Ascending aorta (tissue), 2 donors: ENCODE measurements at regions of chr11 and their contacts with region 1.

Region 1: DNA sequence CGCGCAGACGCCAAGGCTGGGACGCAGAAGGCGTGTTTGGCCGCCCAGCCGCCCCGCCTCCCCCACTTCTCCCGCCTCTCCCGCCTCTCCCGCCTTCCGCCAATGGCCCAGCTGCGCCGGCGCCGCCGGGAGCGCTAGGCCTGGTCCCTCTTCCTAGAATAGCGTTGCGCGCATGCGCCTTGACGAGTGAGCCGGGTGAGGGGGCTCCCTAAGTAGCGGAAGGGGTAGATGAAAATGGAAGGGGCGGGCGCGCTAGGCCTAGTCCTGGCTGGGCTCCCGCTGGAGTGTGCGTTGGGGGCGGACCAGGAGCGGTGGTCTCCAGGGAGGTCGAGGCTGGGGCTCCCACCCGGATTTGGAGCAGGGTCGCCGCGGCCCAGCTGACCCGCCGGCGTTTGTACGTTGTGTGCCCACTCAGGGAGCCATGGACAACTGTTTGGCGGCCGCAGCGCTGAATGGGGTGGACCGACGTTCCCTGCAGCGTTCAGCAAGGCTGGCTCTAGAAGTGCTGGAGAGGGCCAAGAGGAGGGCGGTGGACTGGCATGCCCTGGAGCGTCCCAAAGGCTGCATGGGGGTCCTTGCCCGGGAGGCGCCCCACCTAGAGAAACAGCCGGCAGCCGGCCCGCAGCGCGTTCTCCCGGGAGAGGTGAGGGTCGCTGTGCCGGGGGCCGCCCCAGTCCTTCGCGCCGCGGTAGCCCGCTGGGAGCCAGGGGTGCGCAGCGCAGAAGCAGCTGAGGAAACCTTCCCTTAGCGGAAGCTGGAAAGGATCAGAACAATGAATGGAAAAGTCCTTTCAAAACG is at the start of gene AKIP1:
- DNase-seq: peak; percentile 81 to 97
- H3K4me3 ChIP-seq: peak within 1 kb of the TSS; percentile 72 to 79
- H3K27ac ChIP-seq: peak within 1 kb of the TSS; percentile 88 to 91
- H3K4me1 ChIP-seq: peaks cover 4 to 12% of the 10 kb centered on the region in 2 donors
- H3K27me3 ChIP-seq: no peaks in the 10 kb centered on the region
- CTCF ChIP-seq: no peak
- total RNA-seq, gene AKIP1: 11.4 TPM

Region 2: GRCh38 chr11:8682303-8683114 is 228.7 kb before region 1 on chr11 and contains the starts of genes RPL27A and TRIM66:
- intact Hi-C with region 1: loop called (anchors 2 kb)
- DNase-seq: peak; percentile 91 to 99
- H3K4me3 ChIP-seq: peak within 1 kb of the TSS; percentile 65 to 86
- H3K27ac ChIP-seq: peak within 1 kb of the TSS; percentile 81 to 97
- H3K4me1 ChIP-seq: peaks cover 0 to 16% of the 10 kb centered on the region in 2 donors
- H3K27me3 ChIP-seq: no peaks in the 10 kb centered on the region
- CTCF ChIP-seq: peak in 2 of 3 experiments; percentile 8 to 11
- total RNA-seq, gene RPL27A: 789 TPM
- total RNA-seq, gene TRIM66: 3.9 TPM

Region 3: GRCh38 chr11:8732748-8733241 is 178.4 kb before region 1 on chr11:
- intact Hi-C with region 1: no loop called
- DNase-seq: peak; percentile 70 to 96
- H3K4me3 ChIP-seq: no peak overlapping the region
- H3K27ac ChIP-seq: peak overlapping the region; percentile 75 to 79
- H3K4me1 ChIP-seq: peaks cover 22 to 48% of the 10 kb centered on the region in 2 donors
- H3K27me3 ChIP-seq: no peaks in the 10 kb centered on the region
- CTCF ChIP-seq: no peak

Region 4: DNA sequence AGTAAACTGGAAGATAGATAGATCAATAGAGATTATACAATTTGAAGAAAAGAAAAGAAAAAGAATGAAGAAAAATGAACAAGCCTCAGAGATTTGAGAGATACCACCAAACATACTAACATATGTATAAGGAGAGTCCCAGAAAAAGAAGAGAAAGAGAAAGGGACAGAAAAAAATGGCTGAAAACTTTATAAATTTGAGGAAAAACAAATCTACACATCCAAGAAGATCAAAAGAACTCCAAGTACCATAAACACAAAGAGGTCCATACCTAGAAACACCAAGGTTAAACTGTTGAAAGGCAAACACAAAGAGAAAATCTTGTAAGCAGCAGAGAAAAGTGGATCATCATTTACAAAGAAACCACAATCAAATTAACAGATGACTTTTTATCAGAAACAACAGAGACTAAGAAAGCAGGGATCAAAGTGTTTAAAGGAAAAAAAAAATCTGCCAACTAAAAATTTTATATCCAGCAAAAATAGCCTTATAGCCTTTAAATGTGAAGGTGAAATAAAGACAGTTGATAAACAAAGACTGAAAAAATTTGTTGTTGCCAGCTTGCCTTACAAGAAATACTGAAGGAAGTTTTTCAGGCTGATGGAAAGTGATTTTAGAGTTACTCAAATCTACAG is 12.0 kb before region 1 on chr11:
- intact Hi-C with region 1: no loop called
- DNase-seq: no peak
- H3K4me3 ChIP-seq: no peak overlapping the region
- H3K27ac ChIP-seq: no peak overlapping the region
- H3K4me1 ChIP-seq: no peaks in the 10 kb centered on the region
- H3K27me3 ChIP-seq: no peaks in the 10 kb centered on the region
- CTCF ChIP-seq: no peak

Region 5: GRCh38 chr11:9003573-9004309 is 92.5 kb after region 1 on chr11 and contains the start of gene NRIP3:
- intact Hi-C with region 1: loop called (anchors 2 kb)
- DNase-seq: peak in 1 of 2 donors; percentile 85
- H3K4me3 ChIP-seq: peak within 1 kb of the TSS; percentile 40 to 61
- H3K27ac ChIP-seq: peak within 1 kb of the TSS in 1 of 2 donors; percentile 0
- H3K4me1 ChIP-seq: peaks cover 0 to 14% of the 10 kb centered on the region in 2 donors
- H3K27me3 ChIP-seq: no peaks in the 10 kb centered on the region
- CTCF ChIP-seq: no peak
- total RNA-seq, gene NRIP3: 7.7 TPM